ENCODE measurements at regions of chr5 and their contacts with region 1.

Region 1: GRCh38 chr5:74919487-74919886 is 53.3 kb upstream of the FAM169A start:
- DNase-seq: peak in 3 of 9 experiments; percentile 18 to 73 (median 62)
- ATAC-seq: peak; percentile 78
- H3K4me3 ChIP-seq: no peak overlapping the region
- H3K4me3 Mint-ChIP-seq: no peak overlapping the region
- H3K27ac ChIP-seq: no peak overlapping the region
- H3K27ac Mint-ChIP-seq: no peak overlapping the region
- H3K4me1 ChIP-seq: no peaks in the 10 kb centered on the region
- H3K4me1 Mint-ChIP-seq: no peaks in the 10 kb centered on the region
- H3K27me3 ChIP-seq: no peaks in the 10 kb centered on the region
- H3K27me3 Mint-ChIP-seq: peaks cover 2% of the 10 kb centered on the region
- CTCF ChIP-seq: peak; percentile 79

Region 2: DNA sequence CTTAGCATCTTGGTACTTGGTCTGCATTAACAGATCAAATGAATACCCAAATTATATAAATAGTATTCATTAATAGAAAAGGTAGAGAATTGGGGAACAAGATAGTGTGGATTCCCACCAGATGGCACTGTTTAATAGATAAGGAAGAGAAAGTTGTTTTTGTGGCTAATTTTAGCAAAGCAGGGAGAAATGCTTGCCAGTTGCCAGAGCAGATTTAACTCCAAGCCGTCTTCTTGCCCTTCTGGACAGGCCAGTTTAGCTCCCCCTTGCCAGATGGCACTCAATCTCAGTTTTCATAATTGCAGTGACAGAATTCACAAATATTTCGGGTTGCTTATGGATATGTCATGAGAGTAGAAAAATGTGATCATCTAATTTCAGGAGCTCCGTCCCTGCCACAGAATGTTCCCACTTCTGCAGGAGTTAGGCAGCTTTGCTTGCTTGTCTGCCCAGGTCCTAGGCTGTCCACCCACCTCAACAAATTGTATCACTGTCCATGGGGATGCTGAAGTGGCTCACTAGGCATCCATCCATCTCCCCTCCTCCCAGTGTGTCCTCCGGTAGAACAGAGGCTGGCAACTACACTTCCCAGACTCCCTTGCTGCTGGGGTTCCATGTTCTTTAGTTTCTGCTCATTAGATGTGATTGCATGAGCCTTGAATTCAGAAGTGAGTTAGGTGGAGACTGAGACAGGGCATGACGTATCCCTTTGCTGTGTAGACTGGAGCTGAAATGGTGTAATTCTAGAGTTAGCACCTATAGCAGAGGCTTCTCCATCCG is 246.3 kb before region 1 on chr5:
- CTCF ChIA-PET with region 1: interaction called, 7 read pairs
- POLR2A ChIA-PET with region 1: no interaction called
- intact Hi-C with region 1: loop called in 1 of 2 experiments (anchors 2 kb)
- DNase-seq: peak in 2 of 9 experiments; percentile 32 to 44
- ATAC-seq: no peak
- H3K4me3 ChIP-seq: no peak overlapping the region
- H3K4me3 Mint-ChIP-seq: no peak overlapping the region
- H3K27ac ChIP-seq: no peak overlapping the region
- H3K27ac Mint-ChIP-seq: no peak overlapping the region
- H3K4me1 ChIP-seq: no peaks in the 10 kb centered on the region
- H3K4me1 Mint-ChIP-seq: peaks cover 2% of the 10 kb centered on the region
- H3K27me3 ChIP-seq: peaks cover 0 to 3% of the 10 kb centered on the region in 2 experiments
- H3K27me3 Mint-ChIP-seq: peaks cover 10% of the 10 kb centered on the region
- CTCF ChIP-seq: no peak

Region 3: GRCh38 chr5:75042522-75042921 is 123.0 kb after region 1 on chr5:
- CTCF ChIA-PET with region 1: no interaction called
- POLR2A ChIA-PET with region 1: no interaction called
- intact Hi-C with region 1: no loop called
- DNase-seq: no peak
- ATAC-seq: no peak
- H3K4me3 ChIP-seq: no peak overlapping the region
- H3K4me3 Mint-ChIP-seq: no peak overlapping the region
- H3K27ac ChIP-seq: no peak overlapping the region
- H3K27ac Mint-ChIP-seq: no peak overlapping the region
- H3K4me1 ChIP-seq: peaks cover 23% of the 10 kb centered on the region
- H3K4me1 Mint-ChIP-seq: peaks cover 76% of the 10 kb centered on the region
- H3K27me3 ChIP-seq: no peaks in the 10 kb centered on the region
- H3K27me3 Mint-ChIP-seq: no peaks in the 10 kb centered on the region
- CTCF ChIP-seq: no peak

Measured in CD8-positive, alpha-beta T cell (primary cell).